Lower leg skin (tissue), 4 donors: ENCODE measurements at regions of chr17 and their contacts with region 1.

Region 1: GRCh38 chr17:29533976-29534375 is 32.9 kb downstream of the ABHD15 start:
- DNase-seq: no peak
- H3K4me3 ChIP-seq: no peak overlapping the region
- CTCF ChIP-seq: no peak
- POLR2A ChIP-seq: no peak

Region 2: DNA sequence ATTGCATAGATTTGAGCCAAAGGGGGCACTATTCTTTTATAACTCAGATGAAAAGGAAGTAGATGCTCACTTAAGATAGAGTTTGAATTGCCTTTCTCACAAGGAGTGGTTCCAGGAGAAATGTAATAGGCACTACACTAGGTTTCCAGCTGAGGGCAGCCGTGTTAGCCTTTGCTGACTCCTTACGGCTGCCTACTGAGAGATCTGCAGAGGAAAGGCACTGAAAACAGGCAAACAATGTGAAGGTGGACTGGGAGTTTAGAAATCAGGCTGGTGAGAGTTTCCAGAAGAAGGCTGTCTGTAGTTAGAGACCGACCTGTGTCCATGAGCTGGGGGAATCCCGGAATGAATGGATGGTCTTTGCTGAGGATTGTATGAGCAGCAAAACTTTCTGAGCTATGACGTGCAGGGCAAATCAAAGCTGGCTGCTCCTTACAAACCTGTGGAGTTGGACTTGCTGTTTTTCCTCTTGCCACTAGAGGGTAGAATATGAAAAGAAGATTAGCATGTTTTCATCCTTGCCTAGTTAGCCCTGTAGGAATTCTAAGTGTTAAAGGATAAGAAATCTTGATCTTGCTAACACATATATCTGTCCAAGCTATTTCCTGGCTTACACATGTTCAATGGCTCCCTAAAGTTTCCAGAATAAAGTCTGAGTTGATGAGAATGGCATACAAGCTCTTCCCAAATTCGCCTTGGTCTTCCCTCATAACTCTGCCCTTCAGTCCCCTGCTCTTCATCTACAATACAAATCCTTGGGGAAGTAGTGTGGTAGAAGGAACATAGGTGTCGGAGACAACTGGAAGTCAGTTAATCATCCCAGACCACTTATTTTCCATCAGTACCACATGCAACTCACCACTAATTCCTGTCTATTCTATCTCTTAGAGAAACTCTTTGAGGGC is 163.9 kb before region 1 on chr17:
- intact Hi-C with region 1: loop called (anchors 5 kb)
- DNase-seq: peak; percentile 44 to 85
- H3K4me3 ChIP-seq: no peak overlapping the region
- CTCF ChIP-seq: peak in 2 of 3 donors; percentile 39 to 55
- POLR2A ChIP-seq: no peak